ENCODE measurements at regions of chr4 and their contacts with region 1.

Region 1: DNA sequence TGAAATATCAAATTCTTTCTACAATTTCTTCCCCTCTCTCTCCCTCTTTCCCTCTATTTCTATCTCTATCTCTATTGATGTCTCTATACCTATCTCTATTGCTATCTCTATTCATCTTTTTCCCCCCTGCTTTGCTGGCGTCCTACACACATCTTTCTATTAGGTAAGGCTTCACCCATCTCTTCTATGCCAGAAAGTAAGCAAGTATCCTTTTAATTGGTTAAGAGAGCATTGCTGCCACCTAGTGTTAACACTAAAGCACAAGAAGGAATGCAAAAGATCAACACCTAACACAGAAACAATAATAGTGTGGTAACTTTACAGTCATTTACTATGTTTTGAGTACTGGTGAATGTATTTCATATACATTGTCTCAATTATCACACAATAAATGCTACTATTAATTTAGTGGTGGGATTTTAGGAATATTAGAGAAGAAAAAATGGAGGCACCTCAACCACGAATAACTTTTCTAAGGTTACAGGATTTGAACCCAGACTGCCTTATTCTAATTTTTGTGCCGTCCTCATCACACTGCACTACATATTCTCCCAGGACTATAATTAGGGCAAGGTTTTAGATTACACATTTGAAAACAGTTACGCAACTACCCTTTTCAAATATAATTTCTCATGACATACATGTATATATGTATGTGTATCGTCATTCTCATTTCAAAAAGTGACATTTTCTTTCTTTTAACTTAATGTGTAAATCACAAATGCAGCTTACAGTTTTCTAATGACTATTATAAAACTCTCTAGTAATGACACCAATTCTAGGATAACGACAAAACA is 3.7 kb upstream of the C4orf36 start:
- DNase-seq: peak; percentile 73
- H3K4me3 ChIP-seq: no peak overlapping the region
- H3K27ac ChIP-seq: no peak overlapping the region
- H3K4me1 ChIP-seq: no peaks in the 10 kb centered on the region
- CTCF ChIP-seq: peak; percentile 96

Region 2: DNA sequence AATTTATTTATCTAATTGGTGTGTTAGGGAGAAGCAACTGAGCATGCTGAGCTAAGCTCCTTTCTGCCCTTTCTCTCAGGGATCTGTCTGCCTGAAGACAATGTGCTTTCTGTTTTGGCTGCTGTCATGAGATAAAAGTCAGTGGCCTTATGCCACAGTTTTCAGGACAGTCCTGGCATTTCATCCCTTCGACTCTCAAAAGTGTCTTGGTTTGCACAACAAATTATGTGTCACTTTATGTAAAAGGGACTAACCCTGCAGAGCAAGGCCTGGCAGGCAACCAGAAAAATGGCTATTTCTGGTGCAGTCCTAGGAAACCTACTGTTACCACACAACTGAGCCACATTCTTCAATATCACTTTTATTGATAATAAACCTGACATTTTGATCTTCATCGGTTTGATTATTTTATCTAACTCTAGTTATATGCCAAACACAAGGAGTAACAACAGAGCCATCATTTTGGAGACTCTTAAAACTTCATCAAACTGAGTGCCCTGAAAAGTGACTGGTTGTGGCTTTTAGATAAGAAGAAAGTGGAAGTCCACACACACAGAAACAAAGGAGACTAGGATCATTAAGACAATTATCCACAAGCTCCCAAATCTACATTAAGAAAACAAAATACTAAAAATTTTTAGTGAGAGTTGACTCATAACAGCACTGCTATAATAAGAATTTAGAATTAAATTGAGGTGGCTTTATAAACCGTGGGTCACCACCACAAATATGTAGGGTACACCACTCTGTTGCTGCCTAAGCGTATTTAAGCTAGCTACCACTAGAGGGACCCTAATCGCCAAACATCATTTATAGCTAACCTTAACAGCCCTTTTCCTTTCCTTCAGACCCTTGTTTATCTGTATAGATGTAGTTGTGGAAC is 397.7 kb before region 1 on chr4:
- CTCF ChIA-PET with region 1: interaction called, 3 read pairs
- POLR2A ChIA-PET with region 1: interaction called, 3 read pairs
- intact Hi-C with region 1: loop called (anchors 2 kb)
- DNase-seq: peak; percentile 50
- H3K4me3 ChIP-seq: no peak overlapping the region
- H3K27ac ChIP-seq: no peak overlapping the region
- H3K4me1 ChIP-seq: no peaks in the 10 kb centered on the region
- CTCF ChIP-seq: peak; percentile 92

Region 3: DNA sequence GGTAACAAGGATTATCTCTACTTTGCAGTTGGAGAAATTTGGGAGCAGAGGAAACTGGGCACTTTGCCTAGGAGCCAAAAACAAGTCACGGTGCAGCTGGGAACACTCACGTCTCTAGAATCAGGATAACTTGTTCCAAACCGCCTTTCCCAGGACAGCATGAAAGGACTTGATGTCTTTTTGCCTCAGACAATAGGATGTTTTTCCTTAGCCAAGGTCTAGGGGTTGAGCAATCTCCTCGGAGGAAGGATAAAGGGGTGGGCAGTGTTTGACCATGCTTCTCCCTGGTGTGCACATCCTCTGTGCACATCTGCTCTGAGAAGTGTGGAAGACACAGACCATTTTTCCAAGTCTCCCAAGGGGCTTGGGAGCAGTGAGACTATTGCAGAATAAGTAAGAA is 635.0 kb after region 1 on chr4:
- CTCF ChIA-PET with region 1: no interaction called
- POLR2A ChIA-PET with region 1: no interaction called
- intact Hi-C with region 1: no loop called
- DNase-seq: no peak
- H3K4me3 ChIP-seq: no peak overlapping the region
- H3K27ac ChIP-seq: no peak overlapping the region
- H3K4me1 ChIP-seq: no peaks in the 10 kb centered on the region
- CTCF ChIP-seq: no peak